ENCODE measurements at regions of chr7 and their contacts with region 1.

Region 1: GRCh38 chr7:21317966-21318915 is 109.6 kb upstream of the SP4 start:
- DNase-seq: peak; percentile 89
- H3K4me3 ChIP-seq: peak overlapping the region in 1 of 3 experiments; percentile 19
- H3K27ac ChIP-seq: peak overlapping the region; percentile 96
- H3K4me1 ChIP-seq: peaks cover 44% of the 10 kb centered on the region
- H3K27me3 ChIP-seq: no peaks in the 10 kb centered on the region
- CTCF ChIP-seq: no peak
- POLR2A ChIP-seq: no peak

Region 2: GRCh38 chr7:21160401-21160800 is 157.8 kb before region 1 on chr7:
- CTCF ChIA-PET with region 1: no interaction called
- POLR2A ChIA-PET with region 1: no interaction called
- dilution Hi-C with region 1: no loop called
- intact Hi-C with region 1: no loop called
- DNase-seq: no peak
- H3K4me3 ChIP-seq: no peak overlapping the region
- H3K27ac ChIP-seq: no peak overlapping the region
- H3K4me1 ChIP-seq: no peaks in the 10 kb centered on the region
- H3K27me3 ChIP-seq: no peaks in the 10 kb centered on the region
- CTCF ChIP-seq: no peak
- POLR2A ChIP-seq: no peak

Region 3: GRCh38 chr7:21261627-21262594 is 56.3 kb before region 1 on chr7:
- CTCF ChIA-PET with region 1: interaction called, 7 read pairs
- POLR2A ChIA-PET with region 1: no interaction called
- dilution Hi-C with region 1: no loop called
- intact Hi-C with region 1: loop called (anchors 1 kb)
- DNase-seq: peak; percentile 67
- H3K4me3 ChIP-seq: no peak overlapping the region
- H3K27ac ChIP-seq: no peak overlapping the region
- H3K4me1 ChIP-seq: peaks cover 2% of the 10 kb centered on the region
- H3K27me3 ChIP-seq: no peaks in the 10 kb centered on the region
- CTCF ChIP-seq: peak; percentile 67 to 68
- POLR2A ChIP-seq: no peak

Region 4: GRCh38 chr7:21338728-21339164 is 20.5 kb after region 1 on chr7:
- CTCF ChIA-PET with region 1: interaction called, 7 read pairs
- POLR2A ChIA-PET with region 1: no interaction called
- dilution Hi-C with region 1: no loop called
- intact Hi-C with region 1: loop called (anchors 1 kb)
- DNase-seq: peak; percentile 77
- H3K4me3 ChIP-seq: no peak overlapping the region
- H3K27ac ChIP-seq: peak overlapping the region; percentile 95
- H3K4me1 ChIP-seq: peaks cover 12% of the 10 kb centered on the region
- H3K27me3 ChIP-seq: no peaks in the 10 kb centered on the region
- CTCF ChIP-seq: no peak
- POLR2A ChIP-seq: no peak

Region 5: GRCh38 chr7:21945454-21946227 is 627.4 kb after region 1 on chr7 and contains the start of gene CDCA7L:
- CTCF ChIA-PET with region 1: no interaction called
- POLR2A ChIA-PET with region 1: no interaction called
- dilution Hi-C with region 1: no loop called
- intact Hi-C with region 1: loop called (anchors 5 kb)
- DNase-seq: peak; percentile 82
- H3K4me3 ChIP-seq: peak within 1 kb of the TSS; percentile 59 to 91 (median 80)
- H3K27ac ChIP-seq: peak within 1 kb of the TSS; percentile 91
- H3K4me1 ChIP-seq: peaks cover 52% of the 10 kb centered on the region
- H3K27me3 ChIP-seq: no peaks in the 10 kb centered on the region
- CTCF ChIP-seq: no peak
- POLR2A ChIP-seq: peak; percentile 92
- total RNA-seq, gene CDCA7L: 91.6 and 93.7 TPM in 2 replicates